Activated CD4-positive, alpha-beta T cell treated with anti-CD3 and anti-CD28 coated beads for 36 hours (primary cell): ENCODE measurements at regions of chr16 and their contacts with region 1.

Region 1: GRCh38 chr16:589658-590159 is at the start of gene RAB40C:
- DNase-seq: peak; percentile 100
- ATAC-seq: peak; percentile 88
- H3K4me3 Mint-ChIP-seq: peak within 1 kb of the TSS; percentile 79
- H3K27ac Mint-ChIP-seq: peak within 1 kb of the TSS; percentile 100
- H3K4me1 Mint-ChIP-seq: peaks cover 22% of the 10 kb centered on the region
- H3K27me3 Mint-ChIP-seq: no peaks in the 10 kb centered on the region
- total RNA-seq, gene RAB40C: 8.9 to 9.6 TPM

Region 2: GRCh38 chr16:228818-229730 is 360.6 kb before region 1 on chr16 and contains the start of gene LUC7L:
- CTCF ChIA-PET with region 1: no interaction called
- POLR2A ChIA-PET with region 1: no interaction called
- intact Hi-C with region 1: loop called in 1 of 2 experiments (anchors 1 kb)
- DNase-seq: peak; percentile 93
- ATAC-seq: peak; percentile 90
- H3K4me3 Mint-ChIP-seq: peak within 1 kb of the TSS; percentile 92
- H3K27ac Mint-ChIP-seq: peak within 1 kb of the TSS; percentile 85
- H3K4me1 Mint-ChIP-seq: peaks cover 30% of the 10 kb centered on the region
- H3K27me3 Mint-ChIP-seq: no peaks in the 10 kb centered on the region
- total RNA-seq, gene LUC7L: 44.6 to 50.1 TPM

Region 3: GRCh38 chr16:391885-392335 is 197.8 kb before region 1 on chr16:
- CTCF ChIA-PET with region 1: no interaction called
- POLR2A ChIA-PET with region 1: no interaction called
- intact Hi-C with region 1: loop called in 1 of 2 experiments (anchors 2 kb)
- DNase-seq: peak; percentile 91
- ATAC-seq: peak; percentile 93
- H3K4me3 Mint-ChIP-seq: no peak overlapping the region
- H3K27ac Mint-ChIP-seq: no peak overlapping the region
- H3K4me1 Mint-ChIP-seq: peaks cover 22% of the 10 kb centered on the region
- H3K27me3 Mint-ChIP-seq: peaks cover 3% of the 10 kb centered on the region

Region 4: DNA sequence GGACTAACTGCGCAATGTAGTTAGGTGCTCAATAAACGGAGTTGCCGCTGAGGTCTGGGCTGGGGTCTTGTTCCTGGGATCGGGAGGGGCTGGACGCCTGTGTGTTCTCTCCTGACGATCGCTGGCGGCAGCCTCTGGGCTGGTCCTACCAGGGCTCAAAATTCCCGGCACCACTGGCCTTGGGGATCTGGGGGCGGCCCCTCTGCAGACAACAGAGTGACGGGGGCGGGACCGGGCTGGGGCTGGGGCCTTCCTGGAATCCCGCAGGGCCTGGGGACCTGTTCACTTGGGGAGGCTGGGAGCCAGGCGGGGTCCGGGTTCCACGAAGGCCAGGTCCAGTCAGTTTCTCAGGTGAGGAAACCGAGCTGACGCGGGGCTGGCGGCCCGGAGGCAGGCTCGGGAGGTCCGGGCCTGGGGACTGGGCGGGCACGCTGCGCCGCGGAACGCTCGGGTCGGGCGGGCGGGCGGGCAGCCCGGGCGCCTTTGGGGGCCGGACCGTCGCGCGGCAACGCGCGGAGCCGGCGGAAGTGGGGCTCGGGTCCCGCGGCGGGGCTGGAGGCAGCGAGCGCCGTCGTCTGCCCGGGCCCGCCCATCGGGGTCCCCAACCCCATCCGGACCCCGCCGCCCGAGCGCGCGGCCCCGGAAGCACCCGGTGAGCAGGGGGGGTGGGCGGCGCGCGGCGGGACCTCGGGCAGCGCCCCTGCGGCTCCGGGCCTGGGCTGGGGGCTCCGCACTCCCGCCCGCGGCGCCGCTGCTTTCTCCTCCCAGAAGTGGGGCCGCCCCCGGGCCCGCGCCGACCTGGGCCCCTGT is 20.1 kb before region 1 on chr16 and contains the start of gene PIGQ:
- CTCF ChIA-PET with region 1: no interaction called
- POLR2A ChIA-PET with region 1: no interaction called
- intact Hi-C with region 1: loop called (anchors 1 kb)
- DNase-seq: peak; percentile 79
- ATAC-seq: peak; percentile 70
- H3K4me3 Mint-ChIP-seq: peak within 1 kb of the TSS; percentile 79
- H3K27ac Mint-ChIP-seq: peak within 1 kb of the TSS; percentile 92
- H3K4me1 Mint-ChIP-seq: peaks cover 26% of the 10 kb centered on the region
- H3K27me3 Mint-ChIP-seq: no peaks in the 10 kb centered on the region
- total RNA-seq, gene PIGQ: 24.2 to 24.7 TPM

Region 5: GRCh38 chr16:642189-643055 is 52.7 kb after region 1 on chr16:
- CTCF ChIA-PET with region 1: no interaction called
- POLR2A ChIA-PET with region 1: no interaction called
- intact Hi-C with region 1: no loop called
- DNase-seq: peak; percentile 53
- ATAC-seq: peak; percentile 43
- H3K4me3 Mint-ChIP-seq: peak overlapping the region; percentile 75
- H3K27ac Mint-ChIP-seq: no peak overlapping the region
- H3K4me1 Mint-ChIP-seq: peaks cover 15% of the 10 kb centered on the region
- H3K27me3 Mint-ChIP-seq: no peaks in the 10 kb centered on the region

Region 6: GRCh38 chr16:667780-668518 is 78.2 kb after region 1 on chr16 and contains the start of gene RHOT2:
- CTCF ChIA-PET with region 1: interaction called, 5 read pairs
- POLR2A ChIA-PET with region 1: interaction called, 8 read pairs
- intact Hi-C with region 1: loop called in 1 of 2 experiments (anchors 1 kb)
- DNase-seq: peak; percentile 96
- ATAC-seq: peak; percentile 98
- H3K4me3 Mint-ChIP-seq: peak within 1 kb of the TSS; percentile 76
- H3K27ac Mint-ChIP-seq: peak within 1 kb of the TSS; percentile 85
- H3K4me1 Mint-ChIP-seq: peaks cover 6% of the 10 kb centered on the region
- H3K27me3 Mint-ChIP-seq: no peaks in the 10 kb centered on the region
- total RNA-seq, gene RHOT2: 123 to 130 TPM

Region 7: GRCh38 chr16:788394-789126 is 198.9 kb after region 1 on chr16 and contains the start of gene CHTF18:
- CTCF ChIA-PET with region 1: no interaction called
- POLR2A ChIA-PET with region 1: no interaction called
- intact Hi-C with region 1: loop called in 1 of 2 experiments (anchors 1 kb)
- DNase-seq: peak; percentile 97
- ATAC-seq: peak; percentile 98
- H3K4me3 Mint-ChIP-seq: peak within 1 kb of the TSS; percentile 88
- H3K27ac Mint-ChIP-seq: peak within 1 kb of the TSS; percentile 78
- H3K4me1 Mint-ChIP-seq: peaks cover 13% of the 10 kb centered on the region
- H3K27me3 Mint-ChIP-seq: no peaks in the 10 kb centered on the region
- total RNA-seq, gene CHTF18: 82.2 to 105 TPM

Region 8: DNA sequence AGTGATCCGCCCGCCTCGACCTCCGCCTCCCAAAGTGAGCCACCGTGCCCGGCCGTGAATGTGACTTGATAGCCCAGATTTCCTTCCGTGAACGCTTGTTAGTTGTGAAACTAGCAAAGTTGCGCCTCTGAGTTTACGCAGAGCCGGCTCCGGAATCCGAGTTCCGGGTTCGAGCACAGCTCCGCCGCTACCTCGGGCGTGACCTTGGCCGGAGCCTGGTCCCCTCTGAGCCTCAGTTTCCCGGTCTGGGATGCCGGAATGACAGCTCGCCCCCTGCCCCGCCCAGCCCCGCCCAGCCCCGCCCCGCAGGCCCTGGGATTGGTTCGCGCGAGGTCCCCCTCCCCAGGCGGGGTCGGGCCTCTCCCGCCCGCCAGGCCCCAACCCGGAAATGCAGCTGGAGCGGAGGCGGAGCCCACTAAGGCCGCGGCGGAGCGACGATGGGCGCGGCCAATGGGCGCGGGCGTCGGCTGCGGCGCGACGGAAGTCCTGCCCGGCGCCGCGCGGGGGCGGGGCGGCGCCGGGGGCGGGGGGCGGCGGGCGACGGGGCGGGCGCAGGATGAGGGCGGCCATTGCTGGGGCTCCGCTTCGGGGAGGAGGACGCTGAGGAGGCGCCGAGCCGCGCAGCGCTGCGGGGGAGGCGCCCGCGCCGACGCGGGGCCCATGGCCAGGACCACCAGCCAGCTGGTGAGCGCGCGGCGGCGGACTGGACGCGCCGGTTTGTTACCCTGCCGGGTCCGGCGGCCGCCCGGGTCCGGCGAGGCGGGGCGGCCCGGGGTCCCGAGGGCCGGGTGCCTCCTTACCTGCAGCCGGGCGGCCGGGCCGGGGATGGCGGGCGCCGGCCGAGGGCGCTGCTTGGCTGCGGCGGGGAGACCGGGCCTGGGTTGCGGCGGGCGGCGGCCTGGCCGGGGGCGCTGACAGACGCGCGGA is 1948.0 kb after region 1 on chr16 and contains the start of gene PDPK1:
- CTCF ChIA-PET with region 1: no interaction called
- POLR2A ChIA-PET with region 1: no interaction called
- intact Hi-C with region 1: loop called in 1 of 2 experiments (anchors 5 kb)
- DNase-seq: peak; percentile 97
- ATAC-seq: peak; percentile 93
- H3K4me3 Mint-ChIP-seq: peak within 1 kb of the TSS; percentile 83
- H3K27ac Mint-ChIP-seq: peak within 1 kb of the TSS; percentile 90
- H3K4me1 Mint-ChIP-seq: peaks cover 38% of the 10 kb centered on the region
- H3K27me3 Mint-ChIP-seq: no peaks in the 10 kb centered on the region
- total RNA-seq, gene PDPK1: 30.4 to 34.5 TPM